Activated CD8-positive, alpha-beta T cell treated with anti-CD3 and anti-CD28 coated beads for 36 hours (primary cell): ENCODE measurements at regions of chr1 and their contacts with region 1.

Region 1: GRCh38 chr1:31955917-31956736 is 18.0 kb upstream of the PTP4A2 start:
- DNase-seq: peak; percentile 96
- ATAC-seq: peak; percentile 80
- H3K4me3 Mint-ChIP-seq: peak overlapping the region; percentile 62
- H3K27ac Mint-ChIP-seq: peak overlapping the region; percentile 95
- H3K4me1 Mint-ChIP-seq: peaks cover 66% of the 10 kb centered on the region
- H3K27me3 Mint-ChIP-seq: no peaks in the 10 kb centered on the region
- CTCF ChIP-seq: peak; percentile 13

Region 2: DNA sequence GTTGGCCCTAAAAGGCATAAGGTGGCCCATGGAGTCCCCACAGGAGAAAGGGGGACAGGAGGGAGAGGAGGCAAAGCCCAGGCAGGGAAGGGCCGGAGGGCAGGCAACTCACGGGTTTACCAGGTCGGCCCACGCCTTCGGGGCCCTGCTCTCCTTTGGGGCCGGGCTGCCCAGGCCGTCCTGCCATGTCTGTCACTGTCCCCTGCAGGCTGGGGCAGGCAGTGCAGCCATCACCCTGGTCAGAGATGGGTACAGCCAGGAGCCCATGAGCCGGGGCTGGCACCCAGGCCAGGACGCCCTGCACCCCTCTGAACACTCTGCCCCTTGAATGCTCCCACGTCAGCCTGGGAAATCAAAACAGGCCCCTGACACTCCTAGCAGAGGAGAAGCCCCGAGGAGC is 272.1 kb before region 1 on chr1:
- CTCF ChIA-PET with region 1: no interaction called
- POLR2A ChIA-PET with region 1: no interaction called
- intact Hi-C with region 1: no loop called
- DNase-seq: peak; percentile 27
- ATAC-seq: peak; percentile 74
- H3K4me3 Mint-ChIP-seq: no peak overlapping the region
- H3K27ac Mint-ChIP-seq: no peak overlapping the region
- H3K4me1 Mint-ChIP-seq: no peaks in the 10 kb centered on the region
- H3K27me3 Mint-ChIP-seq: peaks cover 13% of the 10 kb centered on the region
- CTCF ChIP-seq: peak; percentile 37

Region 3: DNA sequence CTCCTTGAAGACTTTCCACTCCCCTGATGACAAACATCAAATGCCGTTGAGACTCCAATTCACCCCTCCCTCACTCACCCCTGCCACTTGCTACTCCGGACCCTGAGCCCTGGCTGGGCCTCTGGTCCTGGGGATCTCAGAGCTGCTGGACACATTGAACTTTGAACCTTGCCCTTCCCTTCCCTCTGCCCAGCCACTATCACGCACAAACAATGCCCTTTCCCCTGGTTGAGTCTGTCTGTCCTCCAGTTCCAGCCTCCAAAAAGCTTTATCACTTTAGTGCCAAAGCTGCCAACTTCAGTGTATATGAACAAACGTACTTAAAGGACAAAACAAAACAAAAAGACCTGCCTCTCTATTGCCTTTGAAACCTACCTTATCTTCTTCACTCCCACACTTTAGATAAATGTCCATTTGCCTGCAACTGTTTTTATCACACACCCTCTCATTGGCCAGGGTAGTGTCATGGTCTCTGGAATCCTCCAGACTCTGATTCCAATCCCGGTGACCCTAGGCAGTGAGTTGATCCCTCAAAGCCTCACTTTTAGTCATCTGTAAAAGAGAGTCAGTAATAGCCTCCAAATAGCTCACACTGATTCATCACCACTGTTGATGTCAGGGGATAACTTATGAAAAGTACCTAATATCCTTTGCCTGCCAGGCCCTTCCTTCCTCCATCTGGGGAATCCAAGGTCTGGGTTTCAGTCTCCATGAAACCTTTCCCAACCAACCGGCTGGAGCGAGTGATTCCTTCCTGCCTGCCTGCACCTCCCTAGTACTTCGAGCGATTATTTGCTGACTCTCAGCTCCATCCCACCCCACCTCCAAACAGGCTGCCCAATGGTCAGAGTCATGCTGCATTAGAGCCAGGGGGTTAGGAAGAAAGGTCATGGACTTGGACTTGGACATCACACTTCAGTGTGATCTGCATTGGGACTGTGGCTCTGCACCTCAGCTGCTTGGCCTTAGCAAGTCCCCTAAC is 124.4 kb before region 1 on chr1:
- CTCF ChIA-PET with region 1: interaction called, 4 read pairs
- POLR2A ChIA-PET with region 1: interaction called, 6 read pairs
- intact Hi-C with region 1: loop called (anchors 5 kb)
- DNase-seq: no peak
- ATAC-seq: no peak
- H3K4me3 Mint-ChIP-seq: no peak overlapping the region
- H3K27ac Mint-ChIP-seq: no peak overlapping the region
- H3K4me1 Mint-ChIP-seq: peaks cover 24% of the 10 kb centered on the region
- H3K27me3 Mint-ChIP-seq: no peaks in the 10 kb centered on the region
- CTCF ChIP-seq: no peak

Region 4: GRCh38 chr1:31891280-31891679 is 64.8 kb before region 1 on chr1:
- CTCF ChIA-PET with region 1: no interaction called
- POLR2A ChIA-PET with region 1: no interaction called
- intact Hi-C with region 1: no loop called
- DNase-seq: peak; percentile 71
- ATAC-seq: peak; percentile 63
- H3K4me3 Mint-ChIP-seq: no peak overlapping the region
- H3K27ac Mint-ChIP-seq: peak overlapping the region; percentile 30
- H3K4me1 Mint-ChIP-seq: peaks cover 27% of the 10 kb centered on the region
- H3K27me3 Mint-ChIP-seq: no peaks in the 10 kb centered on the region
- CTCF ChIP-seq: no peak

Region 5: DNA sequence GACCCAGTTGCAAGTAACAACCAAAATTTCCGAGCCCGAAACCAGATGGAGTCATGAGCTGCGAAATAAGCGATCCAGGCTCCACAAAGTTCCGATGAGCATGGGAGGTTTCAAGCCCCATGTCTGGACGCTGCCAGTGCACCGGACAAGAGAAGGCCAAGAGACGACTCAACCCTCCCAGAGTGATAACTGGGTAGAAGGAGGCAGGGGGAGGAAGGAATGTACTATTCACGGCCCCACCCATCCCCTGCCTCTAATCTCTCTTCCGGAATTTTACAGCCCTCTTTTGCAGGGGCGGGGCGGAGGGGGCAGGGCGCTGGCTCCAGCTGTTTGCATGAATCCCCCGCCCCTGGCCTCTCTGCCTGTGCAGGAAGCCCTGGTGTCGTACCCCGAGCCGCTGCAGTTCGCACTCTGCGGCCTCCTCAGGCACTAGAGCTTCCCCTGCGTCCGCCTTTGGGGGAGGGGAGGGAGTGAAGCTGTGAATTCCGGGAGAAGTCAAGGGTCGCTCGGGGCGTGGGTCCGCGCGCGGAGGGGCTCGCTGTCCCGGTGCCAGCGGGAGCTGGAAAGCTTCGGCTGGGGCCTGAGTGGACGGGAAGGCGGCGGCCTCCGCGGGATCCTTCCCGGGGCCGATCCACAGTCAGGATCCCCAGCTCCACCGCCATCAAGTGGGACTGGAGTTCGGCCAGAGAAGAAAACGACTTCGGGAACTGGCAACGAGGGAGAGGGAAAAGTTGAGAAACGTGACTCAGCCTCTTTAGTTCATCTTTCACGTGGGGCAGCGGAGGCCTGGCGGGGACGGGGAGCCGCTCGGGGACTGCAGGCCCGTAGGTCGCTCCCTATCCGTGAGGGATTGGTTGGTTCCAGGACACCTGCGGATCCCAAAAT is 11.7 kb before region 1 on chr1:
- CTCF ChIA-PET with region 1: interaction called, 116 read pairs
- POLR2A ChIA-PET with region 1: interaction called, 120 read pairs
- intact Hi-C with region 1: loop called (anchors 2 kb)
- DNase-seq: peak; percentile 95
- ATAC-seq: peak; percentile 57
- H3K4me3 Mint-ChIP-seq: peak overlapping the region; percentile 70
- H3K27ac Mint-ChIP-seq: peak overlapping the region; percentile 92
- H3K4me1 Mint-ChIP-seq: peaks cover 53% of the 10 kb centered on the region
- H3K27me3 Mint-ChIP-seq: no peaks in the 10 kb centered on the region
- CTCF ChIP-seq: no peak